PC-3 (cell line): ENCODE measurements at regions of chr6 and their contacts with region 1.

Region 1: DNA sequence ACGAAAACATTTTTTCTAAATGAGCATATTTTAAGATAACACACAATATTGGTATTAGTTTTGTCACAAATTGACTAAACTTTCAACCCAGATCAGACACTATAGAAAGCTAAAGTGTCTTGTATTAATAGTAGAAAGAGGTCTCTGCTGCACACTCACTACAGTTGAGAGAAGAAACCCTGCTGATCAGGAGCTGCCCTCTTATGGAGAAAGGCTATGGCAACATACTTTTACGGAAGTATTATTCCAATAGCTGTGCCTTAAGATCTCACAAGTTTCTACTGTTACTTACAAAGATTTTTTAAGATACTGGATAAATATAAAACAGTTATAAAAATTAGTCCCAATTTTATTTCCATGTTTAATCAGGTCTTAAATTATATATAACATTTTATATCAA is 155.7 kb downstream of the RIMS1 start:
- DNase-seq: peak; percentile 2
- ATAC-seq: no peak
- H3K4me3 ChIP-seq: no peak overlapping the region
- H3K27ac ChIP-seq: no peak overlapping the region
- H3K4me1 ChIP-seq: no peaks in the 10 kb centered on the region
- H3K27me3 ChIP-seq: no peaks in the 10 kb centered on the region
- CTCF ChIP-seq: no peak

Region 2: DNA sequence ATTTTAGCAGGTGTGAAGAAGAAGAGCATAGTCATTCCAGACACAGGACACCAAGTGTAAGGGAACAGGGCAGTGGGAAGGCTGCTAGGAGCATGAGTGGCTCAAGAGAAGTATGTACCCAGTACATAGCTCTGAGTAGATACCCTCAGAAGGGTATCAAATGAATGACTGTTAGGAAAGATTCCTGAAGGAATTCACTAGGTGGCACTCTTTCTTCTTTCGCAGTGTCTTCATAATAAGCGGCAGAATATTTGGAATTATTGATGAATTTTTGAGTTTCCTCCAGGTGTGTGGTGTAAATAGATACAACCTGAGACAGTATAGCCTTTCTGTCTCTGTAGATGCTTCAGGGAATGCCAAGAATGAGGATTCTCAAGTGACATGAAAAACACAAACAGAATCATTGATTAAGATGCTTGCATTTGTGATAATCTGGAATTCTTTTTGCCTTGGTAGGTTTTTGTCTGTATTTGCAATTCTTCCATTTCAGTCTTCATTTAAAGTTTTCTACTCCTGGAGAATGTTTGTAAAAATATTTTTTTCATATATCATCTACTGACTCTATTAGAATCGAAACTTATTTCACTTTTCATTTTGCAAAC is 420.1 kb before region 1 on chr6:
- CTCF ChIA-PET with region 1: no interaction called
- POLR2A ChIA-PET with region 1: no interaction called
- intact Hi-C with region 1: loop called (anchors 5 kb)
- DNase-seq: peak; percentile 47
- ATAC-seq: 0 out of 2 replicates have a peak, but pooled peaks have one; percentile 37
- H3K4me3 ChIP-seq: no peak overlapping the region
- H3K27ac ChIP-seq: no peak overlapping the region
- H3K4me1 ChIP-seq: no peaks in the 10 kb centered on the region
- H3K27me3 ChIP-seq: no peaks in the 10 kb centered on the region
- CTCF ChIP-seq: peak; percentile 63

Region 3: GRCh38 chr6:72084992-72085569 is 43.0 kb after region 1 on chr6:
- CTCF ChIA-PET with region 1: no interaction called
- POLR2A ChIA-PET with region 1: no interaction called
- intact Hi-C with region 1: no loop called
- DNase-seq: peak; percentile 25
- ATAC-seq: no peak
- H3K4me3 ChIP-seq: no peak overlapping the region
- H3K27ac ChIP-seq: no peak overlapping the region
- H3K4me1 ChIP-seq: no peaks in the 10 kb centered on the region
- H3K27me3 ChIP-seq: peaks cover 11% of the 10 kb centered on the region; the same call in 1 of the 2 replicates
- CTCF ChIP-seq: peak; percentile 64